Activated CD8-positive, alpha-beta T cell treated with anti-CD3 and anti-CD28 coated beads, Interleukin-2, amount 10 ng/mL, durations not matched to agents 7 days and 5 days (primary cell): ENCODE measurements at regions of chr10 and their contacts with region 1.

Region 1: DNA sequence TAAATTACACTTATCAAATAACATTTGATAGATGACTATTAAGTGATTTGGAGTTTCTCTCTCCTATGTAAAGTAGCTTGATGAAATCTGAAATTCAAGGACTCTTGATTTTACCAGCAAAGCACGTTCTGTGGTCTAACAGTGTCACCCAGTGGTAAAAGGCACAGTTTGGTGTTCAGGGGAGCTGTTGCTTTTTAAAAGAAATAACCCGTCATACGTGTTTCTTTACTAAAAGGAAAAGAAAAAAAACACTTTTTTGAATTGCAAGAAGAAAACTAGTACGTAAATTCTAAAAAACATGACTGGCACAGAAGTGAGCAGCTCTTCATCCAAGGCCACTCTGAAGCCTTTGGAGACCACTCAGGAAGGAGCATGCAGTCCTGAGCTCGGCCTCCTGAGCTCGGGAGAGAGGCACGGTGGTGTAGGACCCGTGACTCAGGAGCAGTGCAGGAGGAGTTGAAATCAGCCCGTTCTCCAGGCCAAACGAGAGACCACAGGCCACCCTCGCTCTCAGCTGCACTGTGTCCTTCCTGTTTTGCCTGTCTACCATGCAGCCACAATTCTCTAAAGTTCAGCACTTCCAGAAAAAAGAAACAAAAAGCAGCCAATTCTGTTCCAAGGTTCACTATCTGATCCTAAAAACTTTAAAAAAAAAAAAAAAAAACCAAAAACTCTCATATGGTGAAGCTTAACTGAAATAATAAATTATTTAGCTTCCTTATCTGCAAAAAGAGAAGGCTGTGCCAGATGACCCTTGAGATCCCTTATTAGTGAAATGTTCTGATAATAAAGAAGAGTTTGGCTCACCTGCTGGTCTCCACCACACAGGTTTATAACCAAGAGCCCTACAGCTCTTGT is 212.6 kb upstream of the FRMD4A start:
- DNase-seq: peak; percentile 65
- ATAC-seq: peak; percentile 80
- H3K4me3 Mint-ChIP-seq: peak overlapping the region; percentile 56
- H3K27ac Mint-ChIP-seq: peak overlapping the region; percentile 79
- H3K4me1 Mint-ChIP-seq: peaks cover 77% of the 10 kb centered on the region
- H3K27me3 Mint-ChIP-seq: no peaks in the 10 kb centered on the region

Region 2: GRCh38 chr10:14195433-14195832 is 347.8 kb before region 1 on chr10:
- CTCF ChIA-PET with region 1: interaction called, 14 read pairs
- POLR2A ChIA-PET with region 1: no interaction called
- DNase-seq: no peak
- ATAC-seq: no peak
- H3K4me3 Mint-ChIP-seq: no peak overlapping the region
- H3K27ac Mint-ChIP-seq: no peak overlapping the region
- H3K4me1 Mint-ChIP-seq: no peaks in the 10 kb centered on the region
- H3K27me3 Mint-ChIP-seq: peaks cover 47% of the 10 kb centered on the region

Region 3: GRCh38 chr10:14507176-14507575 is 36.1 kb before region 1 on chr10:
- CTCF ChIA-PET with region 1: interaction called, 10 read pairs
- POLR2A ChIA-PET with region 1: no interaction called
- DNase-seq: peak; percentile 58
- ATAC-seq: peak; percentile 91
- H3K4me3 Mint-ChIP-seq: peak overlapping the region; percentile 9
- H3K27ac Mint-ChIP-seq: no peak overlapping the region
- H3K4me1 Mint-ChIP-seq: peaks cover 33% of the 10 kb centered on the region
- H3K27me3 Mint-ChIP-seq: no peaks in the 10 kb centered on the region

Region 4: DNA sequence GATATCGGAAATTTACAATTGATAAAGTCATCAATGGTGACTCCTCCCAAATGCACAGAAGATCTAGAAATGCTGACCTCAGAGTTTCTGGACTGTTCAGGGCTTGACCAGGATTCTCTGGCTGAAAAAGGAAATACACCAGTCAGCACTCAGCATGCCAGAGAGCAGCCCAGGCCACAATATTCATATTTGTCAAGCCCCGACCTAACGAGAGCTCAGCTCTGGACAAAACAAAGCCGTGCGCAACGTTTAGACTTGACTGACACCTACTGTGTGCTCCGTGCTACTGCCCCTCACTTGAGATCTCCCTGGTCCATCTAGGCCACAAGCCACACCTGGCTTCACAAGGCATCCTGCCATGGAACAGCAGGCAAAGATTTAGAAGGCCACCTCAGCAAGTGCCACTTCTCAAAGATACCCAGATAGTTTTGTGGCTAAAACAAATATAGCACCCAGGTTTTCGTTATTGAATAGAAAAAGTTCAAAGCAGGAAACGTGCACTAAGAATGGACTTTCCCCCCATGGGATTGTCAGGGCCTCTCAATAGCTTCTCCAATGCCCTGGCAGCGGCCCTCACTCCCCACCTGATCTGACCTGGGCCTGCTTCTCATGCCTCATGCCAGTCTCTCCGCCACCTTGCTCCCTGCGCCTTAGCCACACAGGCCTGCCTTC is 13.1 kb after region 1 on chr10:
- CTCF ChIA-PET with region 1: interaction called, 45 read pairs
- POLR2A ChIA-PET with region 1: interaction called, 6 read pairs
- DNase-seq: no peak
- ATAC-seq: peak; percentile 14
- H3K4me3 Mint-ChIP-seq: no peak overlapping the region
- H3K27ac Mint-ChIP-seq: peak overlapping the region; percentile 73
- H3K4me1 Mint-ChIP-seq: peaks cover 96% of the 10 kb centered on the region
- H3K27me3 Mint-ChIP-seq: no peaks in the 10 kb centered on the region

Region 5: GRCh38 chr10:14648005-14648765 is 104.9 kb after region 1 on chr10:
- CTCF ChIA-PET with region 1: no interaction called
- POLR2A ChIA-PET with region 1: no interaction called
- DNase-seq: peak; percentile 82
- ATAC-seq: peak; percentile 90
- H3K4me3 Mint-ChIP-seq: peak overlapping the region; percentile 78
- H3K27ac Mint-ChIP-seq: peak overlapping the region; percentile 93
- H3K4me1 Mint-ChIP-seq: peaks cover 49% of the 10 kb centered on the region
- H3K27me3 Mint-ChIP-seq: no peaks in the 10 kb centered on the region

Region 6: DNA sequence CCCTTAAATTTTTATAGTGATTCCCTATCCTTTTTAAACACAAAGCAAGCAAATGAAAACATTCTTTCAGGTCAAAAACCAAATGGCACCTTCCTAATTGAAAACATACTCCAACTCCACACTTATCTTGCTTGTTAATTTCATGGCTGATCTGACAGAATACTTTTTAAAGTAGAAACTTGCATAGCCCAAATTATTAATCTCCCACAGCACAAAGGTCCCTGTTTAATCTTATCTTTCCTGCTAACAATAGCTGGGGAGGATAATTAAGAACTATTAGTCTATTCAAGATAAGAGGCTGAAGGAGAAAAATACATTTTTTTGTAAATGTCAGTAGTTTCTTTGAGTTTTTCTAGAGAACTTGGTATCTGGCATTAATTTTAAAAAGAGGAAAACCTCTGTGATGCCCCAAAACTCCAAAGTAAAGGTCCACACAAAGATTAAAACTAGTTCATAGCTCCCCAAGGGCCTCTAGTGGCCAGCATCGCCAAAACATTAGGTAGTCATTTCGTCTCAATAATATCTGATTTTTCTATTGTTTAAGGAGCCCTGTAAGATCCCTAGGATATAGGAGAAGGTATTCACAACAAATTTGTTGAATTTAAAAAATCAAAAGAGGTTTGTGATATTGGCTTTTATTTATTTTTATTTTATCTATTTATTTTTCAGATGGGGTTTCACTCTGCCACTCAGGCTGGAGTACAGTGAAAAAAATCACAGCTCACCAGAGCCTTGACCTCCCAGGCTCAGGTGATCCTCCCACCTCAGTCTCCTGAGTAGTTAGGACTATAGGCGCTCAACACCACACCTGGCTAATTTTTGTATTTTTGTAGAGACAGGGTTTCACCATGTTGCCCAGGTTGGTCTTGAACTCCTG is 279.8 kb after region 1 on chr10:
- CTCF ChIA-PET with region 1: interaction called, 22 read pairs
- POLR2A ChIA-PET with region 1: no interaction called
- DNase-seq: peak; percentile 61
- ATAC-seq: no peak
- H3K4me3 Mint-ChIP-seq: no peak overlapping the region
- H3K27ac Mint-ChIP-seq: no peak overlapping the region
- H3K4me1 Mint-ChIP-seq: peaks cover 8% of the 10 kb centered on the region
- H3K27me3 Mint-ChIP-seq: peaks cover 13% of the 10 kb centered on the region